Stomach (tissue), 19 donors: ENCODE measurements at regions of chr11 and their contacts with region 1.

Region 1: DNA sequence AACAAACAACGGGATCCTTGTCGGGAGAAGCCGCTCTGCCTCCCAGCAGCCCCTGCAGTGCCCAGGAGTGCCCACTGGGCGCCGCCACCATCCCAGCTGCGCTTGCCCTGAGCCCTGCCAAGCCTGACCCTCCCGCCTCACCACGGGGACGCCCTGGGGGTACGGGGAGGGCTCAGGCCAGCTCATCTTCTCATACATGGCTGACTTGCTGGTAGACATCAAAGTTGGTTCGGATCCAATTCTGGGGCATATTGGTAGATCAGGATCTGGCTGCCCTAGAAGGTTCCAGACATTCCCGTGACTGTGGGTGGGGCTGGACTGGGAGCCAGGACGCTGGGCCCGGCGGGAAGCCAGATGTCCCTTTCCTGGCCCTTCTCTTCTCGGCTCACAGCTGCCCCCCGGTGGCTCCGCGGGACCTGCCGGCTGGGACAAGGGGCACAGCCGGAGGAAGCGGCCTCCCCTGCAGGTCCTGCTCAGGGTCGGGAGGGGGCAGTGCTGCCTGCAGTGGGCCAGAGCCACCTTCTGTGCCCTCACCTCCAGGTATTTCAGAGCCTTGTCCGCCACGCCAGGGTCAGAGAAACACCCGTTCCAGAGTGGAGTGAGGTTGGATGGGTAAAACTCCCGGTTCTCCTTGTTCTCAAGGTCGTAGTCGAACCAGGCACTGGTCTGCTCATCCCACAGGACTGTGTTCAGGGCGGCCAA is 10.6 kb upstream of the TREH start:
- DNase-seq: peak; percentile 84 to 97
- H3K4me3 ChIP-seq: peak overlapping the region; percentile 37 to 51 (median 44)
- H3K27ac ChIP-seq: peak overlapping the region; percentile 52 to 84 (median 71)
- H3K4me1 ChIP-seq: peaks cover 6 to 33% (median 19%) of the 10 kb centered on the region in 4 donors
- H3K27me3 ChIP-seq: no peaks in the 10 kb centered on the region
- CTCF ChIP-seq: peak in 5 of 7 experiments; percentile 62 to 94 (median 85)
- EP300 ChIP-seq: no peak
- POLR2A ChIP-seq: no peak

Region 2: DNA sequence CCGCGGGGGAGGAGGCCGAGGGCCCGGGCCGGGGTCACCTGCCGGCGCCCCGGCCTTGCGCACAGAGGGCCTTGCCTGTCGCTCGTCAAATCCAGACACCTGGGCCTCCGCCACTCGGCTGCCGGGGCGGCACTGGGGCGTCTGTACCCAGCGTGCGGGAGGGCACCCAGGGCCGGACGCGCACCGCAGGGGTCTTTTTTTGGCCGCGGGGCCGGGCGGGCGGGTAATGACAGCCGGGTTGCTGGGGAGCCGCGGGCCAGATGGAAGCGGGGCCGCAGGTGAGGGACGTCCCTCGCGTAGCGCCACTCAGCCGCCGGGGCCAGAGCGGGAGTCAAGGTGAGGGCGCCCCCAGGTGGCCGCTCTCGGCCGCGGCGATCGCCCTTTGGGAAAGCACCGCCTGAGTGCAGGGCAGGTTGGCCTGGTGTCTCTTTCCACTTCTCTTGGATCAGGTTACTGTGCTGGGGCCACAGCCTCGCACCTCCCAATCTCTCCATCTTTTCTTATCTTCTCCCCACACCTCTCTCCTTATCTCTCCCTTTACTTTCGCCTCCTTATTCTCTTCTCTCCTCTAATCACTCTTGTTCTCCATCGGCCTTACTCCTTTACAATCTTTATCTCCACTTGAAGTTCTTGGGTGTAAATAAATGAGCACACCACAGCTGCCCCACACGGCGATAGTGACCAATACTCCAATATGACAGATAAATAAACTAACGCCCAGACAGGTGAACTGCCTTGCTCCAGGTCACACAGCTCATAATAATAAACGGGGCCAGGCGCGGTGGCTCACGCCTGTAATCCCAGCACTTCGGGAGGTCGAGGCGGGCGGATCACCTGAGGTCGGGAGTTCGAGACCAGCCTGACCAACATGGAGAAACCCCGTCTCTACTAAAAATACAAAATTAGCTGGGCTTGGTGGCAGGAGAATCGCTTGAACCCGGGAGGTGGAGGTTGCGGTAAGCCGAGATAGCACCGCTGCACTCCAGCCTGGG is 78.9 kb before region 1 on chr11:
- intact Hi-C with region 1: no loop called
- DNase-seq: peak; percentile 90 to 93
- H3K4me3 ChIP-seq: peak overlapping the region; percentile 47 to 79 (median 70)
- H3K27ac ChIP-seq: peak overlapping the region; percentile 55 to 98 (median 91)
- H3K4me1 ChIP-seq: peaks cover 47 to 79% (median 64%) of the 10 kb centered on the region in 4 donors
- H3K27me3 ChIP-seq: peaks cover 0 to 42% (median 34%) of the 10 kb centered on the region in 3 donors
- CTCF ChIP-seq: peak in 4 of 7 experiments; percentile 55 to 87 (median 82)
- EP300 ChIP-seq: no peak
- POLR2A ChIP-seq: no peak

Region 3: GRCh38 chr11:118791111-118791965 is 101.3 kb after region 1 on chr11 and contains the start of gene DDX6:
- intact Hi-C with region 1: loop called (anchors 10 kb)
- DNase-seq: peak; percentile 93 to 97
- H3K4me3 ChIP-seq: peak within 1 kb of the TSS; percentile 75 to 85 (median 80)
- H3K27ac ChIP-seq: peak within 1 kb of the TSS; percentile 98 to 100 (median 99)
- H3K4me1 ChIP-seq: peaks cover 28 to 54% (median 39%) of the 10 kb centered on the region in 4 donors
- H3K27me3 ChIP-seq: no peaks in the 10 kb centered on the region
- CTCF ChIP-seq: peak in 4 of 7 experiments; percentile 10 to 43 (median 34)
- EP300 ChIP-seq: no peak
- POLR2A ChIP-seq: peak in 2 of 4 donors; percentile 86 to 93
- total RNA-seq, gene DDX6: 21.6 to 203 (median 99.3) TPM

Region 4: DNA sequence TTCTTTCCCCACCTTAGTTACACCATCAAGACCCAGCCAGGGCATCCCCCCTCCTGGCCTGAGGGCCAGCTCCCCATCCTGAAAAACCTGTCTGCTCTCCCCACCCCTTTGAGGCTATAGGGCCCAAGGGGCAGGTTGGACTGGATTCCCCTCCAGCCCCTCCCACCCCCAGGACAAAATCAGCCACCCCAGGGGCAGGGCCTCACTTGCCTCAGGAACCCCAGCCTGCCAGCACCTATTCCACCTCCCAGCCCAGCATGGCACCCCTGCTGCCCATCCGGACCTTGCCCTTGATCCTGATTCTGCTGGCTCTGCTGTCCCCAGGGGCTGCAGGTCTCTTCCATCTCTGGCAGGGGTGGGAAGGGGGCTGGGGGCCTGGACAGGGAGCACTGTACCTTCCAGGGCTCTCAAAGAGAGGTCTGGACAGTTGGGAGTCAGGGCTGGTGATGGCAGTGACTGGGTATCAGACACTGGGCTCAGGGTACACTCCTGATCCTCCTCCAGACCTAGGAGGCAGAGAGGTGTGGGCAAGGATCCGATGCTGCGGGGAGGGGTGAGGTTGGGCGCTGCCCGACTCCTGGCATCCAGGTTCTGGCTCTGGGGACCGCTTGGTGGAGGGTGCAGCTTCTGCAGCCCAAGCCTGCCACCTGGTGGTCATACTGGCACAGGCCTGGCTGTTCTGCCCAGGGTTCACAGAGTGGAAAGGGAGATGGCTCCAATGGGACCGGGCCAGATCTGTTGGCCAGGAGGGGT is 266.3 kb after region 1 on chr11 and contains the start of gene UPK2:
- intact Hi-C with region 1: loop called (anchors 5 kb)
- DNase-seq: peak; percentile 93 to 94
- H3K4me3 ChIP-seq: no peak within 1 kb of the TSS
- H3K27ac ChIP-seq: no peak within 1 kb of the TSS
- H3K4me1 ChIP-seq: no peaks in the 10 kb centered on the region
- H3K27me3 ChIP-seq: peaks cover 0 to 22% (median 0%) of the 10 kb centered on the region in 3 donors
- CTCF ChIP-seq: peak in 5 of 7 experiments; percentile 93 to 97 (median 96)
- EP300 ChIP-seq: no peak
- POLR2A ChIP-seq: no peak
- total RNA-seq, gene UPK2: not detected